ENCODE measurements at regions of chr15 and their contacts with region 1.

Region 1: DNA sequence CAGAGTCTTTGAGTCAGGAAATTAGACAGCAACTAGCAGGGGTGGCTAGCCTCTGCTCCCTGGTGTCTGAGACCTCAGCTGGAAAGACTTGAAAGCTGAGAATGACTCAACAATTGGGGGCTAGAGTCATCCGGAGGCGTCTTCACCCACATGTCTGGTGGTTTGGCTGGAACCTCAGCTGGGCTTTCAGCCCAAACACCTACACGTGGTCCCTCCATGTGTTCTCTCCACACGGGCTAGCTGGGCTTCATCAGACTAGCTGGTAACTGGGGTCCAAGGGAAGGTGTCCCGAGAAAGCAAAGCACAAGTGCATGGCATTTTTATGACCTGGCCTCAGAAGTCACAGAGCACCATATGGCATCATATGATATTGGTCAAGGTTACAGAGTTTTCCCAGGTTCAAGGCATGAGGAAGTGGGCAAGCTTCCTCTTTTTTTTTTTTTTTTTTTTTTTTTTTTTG is 19.9 kb upstream of the ABHD2 start:
- DNase-seq: no peak
- ATAC-seq: no peak
- H3K4me3 ChIP-seq: no peak overlapping the region
- H3K27ac ChIP-seq: no peak overlapping the region
- H3K4me1 ChIP-seq: no peaks in the 10 kb centered on the region
- H3K27me3 ChIP-seq: no peaks in the 10 kb centered on the region

Region 2: DNA sequence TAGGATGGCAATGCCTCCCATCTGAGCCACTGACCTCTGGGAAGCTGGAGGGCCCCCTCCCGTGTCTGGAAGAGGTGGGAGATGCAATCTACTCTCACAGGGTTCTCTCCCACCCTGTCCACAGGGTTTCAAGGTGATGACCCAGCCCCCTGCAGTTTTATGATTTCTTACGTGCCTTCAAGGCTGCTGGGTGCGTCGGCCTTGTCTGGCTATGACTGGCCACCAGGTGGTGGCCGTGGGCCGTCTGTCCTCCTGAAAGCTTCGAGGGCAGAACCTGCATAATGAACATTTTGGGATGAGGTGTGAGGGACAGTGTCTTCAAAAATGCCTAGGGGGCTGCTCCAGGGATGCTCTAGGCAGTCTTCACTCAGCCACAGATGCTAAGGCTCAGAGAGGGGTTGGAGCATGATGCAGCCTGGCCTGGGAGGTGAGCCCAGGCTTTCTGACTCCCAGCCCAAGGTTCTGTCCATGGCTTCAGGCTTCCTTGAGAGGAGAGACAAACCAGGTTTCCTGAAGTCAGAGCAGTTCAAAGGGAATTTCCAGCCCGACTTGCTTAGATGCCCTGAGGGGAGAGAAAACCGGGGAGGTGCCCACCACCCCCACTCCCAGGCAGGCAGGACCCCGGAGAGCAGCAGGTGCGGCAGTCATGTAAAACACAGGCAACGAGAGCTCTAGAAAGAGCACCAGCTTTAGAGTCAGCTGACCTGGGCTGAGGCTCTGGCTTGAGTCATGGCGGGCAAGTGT is 410.9 kb before region 1 on chr15:
- intact Hi-C with region 1: no loop called
- DNase-seq: no peak
- ATAC-seq: peak; percentile 37 to 63
- H3K4me3 ChIP-seq: no peak overlapping the region
- H3K27ac ChIP-seq: no peak overlapping the region
- H3K4me1 ChIP-seq: no peaks in the 10 kb centered on the region
- H3K27me3 ChIP-seq: no peaks in the 10 kb centered on the region

Region 3: GRCh38 chr15:89139400-89140166 is 71.2 kb after region 1 on chr15:
- intact Hi-C with region 1: loop called in 1 of 4 experiments (anchors 10 kb)
- DNase-seq: peak in 2 of 3 donors; percentile 63 to 65
- ATAC-seq: peak in 1 of 2 donors; percentile 23
- H3K4me3 ChIP-seq: no peak overlapping the region
- H3K27ac ChIP-seq: peak overlapping the region; percentile 57
- H3K4me1 ChIP-seq: peaks cover 35% of the 10 kb centered on the region
- H3K27me3 ChIP-seq: no peaks in the 10 kb centered on the region

Measured in right cardiac atrium (tissue), 5 donors.